ENCODE measurements at regions of chr5 and their contacts with region 1.

Region 1: DNA sequence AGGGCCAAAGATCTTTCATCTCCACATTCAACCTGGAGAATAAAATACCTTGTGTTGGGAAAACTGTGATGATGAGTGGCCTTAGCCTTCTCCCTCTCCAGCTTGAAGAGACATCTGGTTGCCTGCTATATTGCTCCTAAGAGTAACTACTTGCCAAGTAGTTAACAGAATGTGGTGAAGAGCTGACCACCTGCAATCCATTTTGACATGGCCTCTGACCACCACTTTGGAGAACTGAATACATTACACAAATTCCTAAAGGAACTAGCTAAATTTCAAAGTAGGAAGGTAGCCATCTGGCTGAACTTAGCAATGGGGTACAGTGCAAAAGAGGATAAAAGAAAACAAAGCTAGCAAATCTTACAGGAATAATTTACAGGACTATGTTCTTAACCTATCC is 7.2 kb downstream of the TBCA start:
- DNase-seq: no peak
- ATAC-seq: no peak
- H3K4me3 ChIP-seq: no peak overlapping the region
- H3K27ac ChIP-seq: no peak overlapping the region
- H3K4me1 ChIP-seq: peaks cover 43 to 49% of the 10 kb centered on the region in 2 donors
- H3K27me3 ChIP-seq: no peaks in the 10 kb centered on the region
- CTCF ChIP-seq: no peak
- POLR2A ChIP-seq: no peak

Region 2: DNA sequence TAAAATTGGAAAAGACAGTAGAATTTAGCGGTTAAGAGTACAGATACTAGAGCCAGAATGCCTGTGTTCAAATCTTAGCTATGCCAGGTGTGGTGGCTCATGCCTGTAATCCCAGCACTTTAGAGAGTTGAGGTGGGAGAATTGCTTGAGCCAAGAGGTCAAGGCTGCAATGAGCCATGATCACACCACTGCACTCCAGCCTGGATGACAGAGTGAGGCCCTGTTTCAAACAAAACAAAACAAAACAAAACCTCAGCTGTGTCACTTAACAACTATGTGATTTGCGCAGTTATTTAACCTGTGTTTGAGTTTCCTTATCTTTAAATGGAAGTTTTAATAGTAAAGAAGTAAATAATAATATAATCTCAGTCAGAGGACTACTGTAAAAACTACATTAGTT is 61.2 kb before region 1 on chr5:
- in situ Hi-C with region 1: no loop called
- intact Hi-C with region 1: loop called (anchors 5 kb)
- DNase-seq: no peak
- ATAC-seq: no peak
- H3K4me3 ChIP-seq: no peak overlapping the region
- H3K27ac ChIP-seq: no peak overlapping the region
- H3K4me1 ChIP-seq: peaks cover 4 to 24% of the 10 kb centered on the region in 2 donors
- H3K27me3 ChIP-seq: no peaks in the 10 kb centered on the region
- CTCF ChIP-seq: no peak
- POLR2A ChIP-seq: no peak